ENCODE measurements at regions of chr11 and their contacts with region 1.

Region 1: DNA sequence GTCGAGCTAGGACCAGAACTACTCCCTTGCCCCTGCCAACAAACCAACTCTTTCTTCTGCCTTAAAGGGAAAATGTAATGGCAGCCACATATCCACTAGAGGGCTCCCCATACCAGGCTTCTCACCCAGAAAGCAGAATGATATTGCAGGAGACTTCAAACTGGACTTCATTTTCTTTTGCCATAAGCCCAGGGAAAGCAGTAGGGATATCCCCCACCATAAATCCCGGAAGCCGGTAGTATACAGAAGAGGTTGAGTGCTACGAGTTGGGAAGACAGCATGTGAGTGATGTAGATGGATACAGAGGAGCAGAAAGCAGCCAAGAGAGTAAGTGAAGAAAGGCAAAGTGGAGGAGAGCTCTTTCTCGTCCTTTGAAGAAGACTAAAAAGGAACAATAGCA is 12.1 kb downstream of the PLAAT5 start:
- DNase-seq: peak; percentile 14
- H3K4me3 ChIP-seq: no peak overlapping the region
- H3K27me3 ChIP-seq: 0 out of 2 replicates have a peak, but pooled peaks cover 2% of the 10 kb centered on the region
- CTCF ChIP-seq: peak; percentile 88

Region 2: GRCh38 chr11:63462137-63462536 is 16.8 kb before region 1 on chr11:
- CTCF ChIA-PET with region 1: interaction called, 25 read pairs
- POLR2A ChIA-PET with region 1: no interaction called
- DNase-seq: no peak
- H3K4me3 ChIP-seq: no peak overlapping the region
- H3K27me3 ChIP-seq: peaks cover 4% of the 10 kb centered on the region
- CTCF ChIP-seq: no peak

Region 3: DNA sequence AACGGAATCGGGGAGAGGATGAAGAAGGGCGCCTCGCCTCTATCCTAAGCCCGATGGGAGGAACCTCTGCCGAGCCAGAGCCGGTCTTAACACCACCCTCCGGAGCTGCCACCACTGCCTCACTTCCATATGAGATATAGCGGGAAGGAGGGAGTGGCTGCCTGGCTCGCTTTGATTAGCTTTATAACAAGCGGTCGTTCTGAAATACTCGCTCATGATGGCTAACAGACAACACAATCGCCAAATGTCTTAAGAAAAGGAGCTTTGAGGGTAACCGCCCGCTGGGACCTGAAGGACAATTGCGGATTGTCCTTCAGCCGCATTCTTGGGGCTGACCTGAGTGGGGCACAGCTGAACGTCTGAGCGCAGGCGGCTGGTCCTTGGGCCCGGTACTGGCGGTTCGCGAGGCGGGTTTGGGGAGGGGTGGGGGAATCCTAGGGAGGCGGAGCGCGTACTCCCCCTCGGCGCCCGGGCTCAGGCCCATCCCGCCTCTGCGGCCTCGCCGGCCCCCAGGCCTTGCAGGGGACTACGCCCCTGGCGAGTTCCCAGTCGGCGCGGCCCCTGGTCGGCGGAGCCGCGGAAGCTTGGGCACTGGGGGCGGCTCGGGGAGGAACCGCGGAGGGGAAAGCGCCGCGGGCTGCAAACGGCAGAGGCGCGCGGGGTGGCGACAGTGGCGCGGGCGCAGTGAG is 11.8 kb after region 1 on chr11 and contains the start of gene PLAAT5:
- CTCF ChIA-PET with region 1: interaction called, 32 read pairs
- POLR2A ChIA-PET with region 1: no interaction called
- DNase-seq: no peak
- H3K4me3 ChIP-seq: peak within 1 kb of the TSS; percentile 24
- H3K27me3 ChIP-seq: peaks cover 21% of the 10 kb centered on the region
- CTCF ChIP-seq: no peak
- polyA plus RNA-seq, gene PLAAT5: not detected in 2 replicates

Region 4: GRCh38 chr11:63567044-63567840 is 88.3 kb after region 1 on chr11:
- CTCF ChIA-PET with region 1: no interaction called
- POLR2A ChIA-PET with region 1: no interaction called
- DNase-seq: peak; percentile 61
- H3K4me3 ChIP-seq: no peak overlapping the region
- H3K27me3 ChIP-seq: no peaks in the 10 kb centered on the region
- CTCF ChIP-seq: no peak

Region 5: GRCh38 chr11:63621931-63622782 is 143.3 kb after region 1 on chr11:
- CTCF ChIA-PET with region 1: interaction called, 21 read pairs
- POLR2A ChIA-PET with region 1: no interaction called
- DNase-seq: no peak
- H3K4me3 ChIP-seq: no peak overlapping the region
- H3K27me3 ChIP-seq: no peaks in the 10 kb centered on the region
- CTCF ChIP-seq: no peak

Region 6: GRCh38 chr11:63635762-63636465 is 157.0 kb after region 1 on chr11:
- CTCF ChIA-PET with region 1: interaction called, 61 read pairs
- POLR2A ChIA-PET with region 1: no interaction called
- DNase-seq: no peak
- H3K4me3 ChIP-seq: no peak overlapping the region
- H3K27me3 ChIP-seq: no peaks in the 10 kb centered on the region
- CTCF ChIP-seq: peak; percentile 77

Measured in BJ (cell line).